ENCODE measurements at regions of chr18 and their contacts with region 1.

Region 1: DNA sequence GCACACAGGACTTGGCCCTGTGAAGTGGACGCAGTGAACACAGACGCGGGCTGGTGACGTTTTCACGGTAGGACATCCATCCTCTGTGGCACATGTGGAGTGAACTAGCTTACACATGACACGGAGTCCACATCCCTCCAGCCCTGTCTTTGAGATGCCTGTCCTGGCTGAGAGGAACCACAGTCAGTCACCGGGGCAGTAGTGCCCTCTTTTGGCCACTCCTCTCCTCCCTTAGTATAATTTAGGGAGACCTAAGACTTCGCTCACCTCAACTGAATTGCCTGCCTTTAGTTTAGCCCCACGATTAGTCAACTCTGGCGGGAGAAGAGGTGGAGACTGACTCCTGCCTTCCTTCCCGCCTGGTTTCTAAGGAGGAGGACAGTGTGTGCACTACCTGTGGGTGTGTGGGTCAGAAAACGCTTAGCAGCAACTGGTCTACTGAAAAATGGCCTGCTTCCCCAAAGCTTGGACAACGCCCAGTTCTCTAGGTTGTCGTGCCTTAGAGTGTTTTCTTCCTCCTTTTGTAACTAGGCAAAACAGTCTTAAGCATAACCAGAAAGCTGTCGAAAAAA is 70.6 kb downstream of the MBP start:
- DNase-seq: peak in 4 of 9 experiments; percentile 38 to 71 (median 51)
- ATAC-seq: peak; percentile 6
- H3K4me3 ChIP-seq: peak overlapping the region in 1 of 2 experiments; percentile 9
- H3K4me3 Mint-ChIP-seq: peak overlapping the region; percentile 33
- H3K27ac ChIP-seq: peak overlapping the region; percentile 80 to 86
- H3K27ac Mint-ChIP-seq: peak overlapping the region; percentile 99
- H3K4me1 ChIP-seq: peaks cover 80% of the 10 kb centered on the region
- H3K4me1 Mint-ChIP-seq: peaks cover 83% of the 10 kb centered on the region
- H3K27me3 ChIP-seq: no peaks in the 10 kb centered on the region
- H3K27me3 Mint-ChIP-seq: no peaks in the 10 kb centered on the region
- CTCF ChIP-seq: no peak

Region 2: GRCh38 chr18:76822510-76823160 is 239.4 kb before region 1 on chr18 and contains the start of gene ZNF236:
- CTCF ChIA-PET with region 1: no interaction called
- POLR2A ChIA-PET with region 1: no interaction called
- intact Hi-C with region 1: loop called in 1 of 2 experiments (anchors 2 kb)
- DNase-seq: peak; percentile 43 to 86 (median 68)
- ATAC-seq: peak; percentile 50
- H3K4me3 ChIP-seq: peak within 1 kb of the TSS; percentile 75 to 97
- H3K4me3 Mint-ChIP-seq: peak within 1 kb of the TSS; percentile 93
- H3K27ac ChIP-seq: peak within 1 kb of the TSS; percentile 67 to 91
- H3K27ac Mint-ChIP-seq: peak within 1 kb of the TSS; percentile 96
- H3K4me1 ChIP-seq: peaks cover 28% of the 10 kb centered on the region
- H3K4me1 Mint-ChIP-seq: peaks cover 50% of the 10 kb centered on the region
- H3K27me3 ChIP-seq: no peaks in the 10 kb centered on the region
- H3K27me3 Mint-ChIP-seq: no peaks in the 10 kb centered on the region
- CTCF ChIP-seq: no peak
- total RNA-seq, gene ZNF236: 24.9 to 25.4 TPM

Region 3: DNA sequence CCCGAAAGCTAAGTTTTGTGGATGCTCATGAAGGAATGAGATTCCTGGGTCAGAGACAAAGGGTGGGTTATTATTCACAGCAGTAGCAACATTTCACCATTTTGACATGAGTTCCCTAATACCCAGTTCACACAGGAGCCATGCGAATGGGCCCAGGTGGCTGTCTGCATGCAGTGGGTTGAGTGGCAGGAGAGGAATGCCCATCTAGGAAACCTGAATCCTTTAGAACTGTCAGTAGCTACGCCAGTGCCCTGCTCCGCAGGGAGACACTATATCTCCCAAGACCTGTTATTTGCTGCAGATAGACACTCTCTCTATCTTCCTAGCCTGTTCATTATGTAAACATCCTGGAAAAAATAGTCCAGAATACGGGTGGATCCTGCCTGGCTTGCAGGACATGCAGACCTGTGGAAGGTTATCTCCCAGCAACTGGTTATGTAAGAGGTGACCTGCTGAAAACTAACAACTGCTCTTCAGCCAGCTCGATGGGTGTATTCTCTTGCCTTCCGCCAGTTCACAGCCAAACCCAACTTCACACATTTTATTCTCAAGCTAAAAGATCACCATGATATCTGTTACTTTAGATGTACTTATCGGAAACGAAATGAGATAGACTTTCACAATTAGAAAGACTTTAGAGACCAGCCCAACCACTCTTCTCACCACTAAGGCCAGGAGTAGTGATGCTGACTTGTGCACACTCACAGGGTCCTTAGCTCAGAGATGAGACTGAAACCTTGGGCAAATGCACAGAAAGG is 11.5 kb after region 1 on chr18:
- CTCF ChIA-PET with region 1: interaction called, 8 read pairs
- POLR2A ChIA-PET with region 1: interaction called, 12 read pairs
- intact Hi-C with region 1: loop called in 1 of 2 experiments (anchors 1 kb)
- DNase-seq: peak in 2 of 9 experiments; percentile 64 to 84
- ATAC-seq: peak; percentile 29
- H3K4me3 ChIP-seq: peak overlapping the region in 1 of 2 experiments; percentile 4
- H3K4me3 Mint-ChIP-seq: peak overlapping the region; percentile 24
- H3K27ac ChIP-seq: peak overlapping the region; percentile 21 to 87
- H3K27ac Mint-ChIP-seq: peak overlapping the region; percentile 73
- H3K4me1 ChIP-seq: peaks cover 67% of the 10 kb centered on the region
- H3K4me1 Mint-ChIP-seq: peaks cover 86% of the 10 kb centered on the region
- H3K27me3 ChIP-seq: no peaks in the 10 kb centered on the region
- H3K27me3 Mint-ChIP-seq: no peaks in the 10 kb centered on the region
- CTCF ChIP-seq: no peak

Region 4: GRCh38 chr18:77108001-77108692 is 46.1 kb after region 1 on chr18:
- CTCF ChIA-PET with region 1: interaction called, 3 read pairs
- POLR2A ChIA-PET with region 1: interaction called, 6 read pairs
- intact Hi-C with region 1: loop called (anchors 1 kb)
- DNase-seq: peak in 4 of 9 experiments; percentile 34 to 68 (median 54)
- ATAC-seq: peak; percentile 18
- H3K4me3 ChIP-seq: no peak overlapping the region
- H3K4me3 Mint-ChIP-seq: peak overlapping the region; percentile 55
- H3K27ac ChIP-seq: peak overlapping the region; percentile 31 to 87
- H3K27ac Mint-ChIP-seq: peak overlapping the region; percentile 94
- H3K4me1 ChIP-seq: peaks cover 82% of the 10 kb centered on the region
- H3K4me1 Mint-ChIP-seq: peaks cover 92% of the 10 kb centered on the region
- H3K27me3 ChIP-seq: no peaks in the 10 kb centered on the region
- H3K27me3 Mint-ChIP-seq: no peaks in the 10 kb centered on the region
- CTCF ChIP-seq: no peak

Region 5: DNA sequence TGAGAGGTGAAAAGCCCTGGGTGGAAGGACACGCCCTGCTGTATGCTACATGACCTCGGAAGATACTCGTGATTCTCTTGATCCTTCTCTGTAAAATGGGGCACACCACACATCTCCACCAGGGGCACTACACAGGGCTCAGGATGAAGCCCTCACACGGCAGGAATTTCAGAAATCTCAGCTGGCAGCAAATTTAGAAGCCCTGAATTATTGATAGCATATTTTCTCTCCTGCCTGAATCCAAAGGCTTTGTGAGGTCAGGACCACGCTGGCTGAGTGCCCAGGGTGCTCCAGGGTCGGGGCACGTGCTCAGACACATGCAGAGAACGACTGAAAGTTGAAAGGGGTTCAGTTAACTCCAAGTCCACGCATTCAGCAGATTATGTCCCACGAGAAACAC is 145.5 kb after region 1 on chr18:
- CTCF ChIA-PET with region 1: interaction called, 13 read pairs
- POLR2A ChIA-PET with region 1: no interaction called
- intact Hi-C with region 1: loop called in 1 of 2 experiments (anchors 2 kb)
- DNase-seq: peak; percentile 29 to 80 (median 58)
- ATAC-seq: peak; percentile 93
- H3K4me3 ChIP-seq: no peak overlapping the region
- H3K4me3 Mint-ChIP-seq: peak overlapping the region; percentile 62
- H3K27ac ChIP-seq: no peak overlapping the region
- H3K27ac Mint-ChIP-seq: peak overlapping the region; percentile 34
- H3K4me1 ChIP-seq: peaks cover 40% of the 10 kb centered on the region
- H3K4me1 Mint-ChIP-seq: peaks cover 46% of the 10 kb centered on the region
- H3K27me3 ChIP-seq: no peaks in the 10 kb centered on the region
- H3K27me3 Mint-ChIP-seq: peaks cover 2% of the 10 kb centered on the region
- CTCF ChIP-seq: peak; percentile 57